ENCODE measurements at regions of chr6 and their contacts with region 1.

Region 1: DNA sequence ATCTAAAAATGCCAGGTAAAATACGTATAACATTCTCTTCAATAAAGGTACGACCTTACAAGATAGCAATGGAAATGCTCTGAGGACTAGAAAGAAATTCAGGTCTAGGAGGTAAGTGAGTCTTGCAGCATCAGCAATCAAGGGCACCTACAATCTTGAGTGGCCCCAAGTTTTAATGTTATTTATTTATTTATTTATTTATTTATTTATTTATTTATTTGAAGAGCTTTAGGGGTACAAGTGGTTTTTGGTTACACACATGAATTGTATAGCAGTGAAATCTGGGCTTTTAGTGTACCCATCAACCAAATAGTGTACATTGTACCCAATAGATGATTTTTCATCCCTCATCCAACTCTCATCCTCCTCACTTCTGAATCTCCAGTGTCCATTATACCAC is 574.0 kb upstream of the POU3F2 start:
- DNase-seq: no peak

Region 2: DNA sequence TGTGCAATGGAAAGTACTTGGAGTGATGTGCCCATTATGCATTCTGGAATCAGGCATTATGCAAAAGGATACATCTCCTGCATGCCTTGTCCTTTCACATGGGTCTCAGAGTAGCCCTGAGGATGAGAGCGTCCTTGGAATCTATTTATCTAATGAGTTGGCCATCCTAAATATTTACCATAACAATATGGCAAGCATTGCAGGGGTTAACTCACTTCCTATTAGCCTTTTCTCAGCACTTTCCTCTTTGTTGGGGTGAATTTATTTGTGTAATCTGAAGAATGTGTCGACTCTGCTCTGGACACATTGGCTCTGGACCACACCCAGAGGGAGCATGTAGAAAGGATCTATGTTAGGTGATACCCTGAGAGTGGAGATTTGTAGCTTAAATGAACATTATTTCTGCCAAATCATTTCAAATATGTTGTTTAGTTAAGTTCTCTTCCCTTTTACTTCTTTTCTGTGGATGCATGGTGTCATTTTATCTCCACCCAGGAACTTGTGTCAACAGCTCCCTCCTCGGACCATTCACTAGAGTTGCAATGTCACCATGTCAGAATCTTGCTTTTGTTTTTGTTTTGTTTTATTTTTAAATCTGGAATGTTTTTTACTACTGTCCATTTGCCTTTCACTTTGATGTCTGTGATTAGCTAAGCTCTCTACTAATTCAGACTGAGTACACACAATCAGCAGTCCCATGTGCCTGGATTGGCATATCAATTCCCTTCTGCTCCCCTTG is 220.3 kb before region 1 on chr6:
- intact Hi-C with region 1: no loop called
- DNase-seq: no peak

Region 3: DNA sequence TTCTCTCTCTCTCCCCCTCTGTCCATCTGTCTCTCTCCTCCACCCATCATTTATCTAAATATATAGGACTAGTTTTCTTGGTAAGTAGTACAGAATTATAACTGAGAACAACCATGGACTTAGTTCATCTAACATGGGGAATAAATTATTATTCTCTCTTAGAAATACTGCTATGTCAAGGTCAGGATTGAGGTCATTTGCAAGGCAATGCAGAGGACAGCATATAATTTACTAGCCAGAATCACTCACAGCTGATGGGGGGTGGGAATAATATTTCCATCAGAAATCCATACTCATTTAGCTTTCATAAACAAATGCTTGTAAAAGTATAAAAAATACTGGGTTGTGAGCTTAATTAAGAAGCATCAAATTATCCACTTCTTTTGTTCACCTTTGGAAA is 20.1 kb after region 1 on chr6:
- intact Hi-C with region 1: loop called in 1 of 2 experiments (anchors 1 kb)
- DNase-seq: no peak

Region 4: GRCh38 chr6:98824162-98824906 is 564.0 kb after region 1 on chr6:
- intact Hi-C with region 1: no loop called
- DNase-seq: no peak

Measured in posterior vena cava (tissue), 2 donors.